ENCODE measurements at regions of chr21 and their contacts with region 1.

Region 1: DNA sequence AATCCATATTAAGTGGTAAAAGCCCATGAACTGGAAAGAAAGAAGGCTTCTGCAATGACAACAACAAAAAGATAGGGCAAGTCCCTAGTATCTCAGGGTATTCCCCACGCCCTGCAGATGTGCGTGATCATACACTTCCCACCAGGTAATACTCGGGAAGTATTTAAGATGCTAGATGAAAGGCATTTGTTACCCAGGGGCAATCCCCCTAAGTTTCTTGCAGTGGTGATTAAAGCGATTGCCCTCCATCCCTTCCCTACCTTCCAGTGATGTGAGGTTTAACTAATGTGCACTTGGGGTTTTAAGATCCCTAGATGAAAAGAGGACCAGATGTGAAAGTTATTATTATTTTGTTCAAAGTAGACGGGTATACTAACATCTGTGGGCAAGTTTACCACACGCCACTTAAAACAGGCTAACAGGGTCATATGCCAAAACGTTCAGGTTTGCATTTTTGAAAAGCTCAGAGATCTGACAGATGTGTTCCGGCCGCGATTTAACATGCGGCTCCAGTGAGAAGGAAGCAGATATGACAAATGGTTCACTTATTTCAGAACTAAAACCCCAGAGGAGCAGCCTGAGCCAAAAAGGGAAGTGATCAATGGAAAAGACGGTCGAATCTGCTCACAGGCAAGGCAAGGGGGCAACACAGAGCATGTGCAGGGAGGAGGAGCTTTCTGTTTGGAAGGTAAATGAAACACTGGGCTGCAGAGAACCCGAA is 17.4 kb downstream of the TIAM1 start:
- DNase-seq: peak; percentile 80
- ATAC-seq: peak; percentile 93
- H3K4me3 Mint-ChIP-seq: peak overlapping the region; percentile 28
- H3K27ac Mint-ChIP-seq: peak overlapping the region; percentile 89
- H3K4me1 Mint-ChIP-seq: peaks cover 32% of the 10 kb centered on the region
- H3K27me3 Mint-ChIP-seq: no peaks in the 10 kb centered on the region

Region 2: DNA sequence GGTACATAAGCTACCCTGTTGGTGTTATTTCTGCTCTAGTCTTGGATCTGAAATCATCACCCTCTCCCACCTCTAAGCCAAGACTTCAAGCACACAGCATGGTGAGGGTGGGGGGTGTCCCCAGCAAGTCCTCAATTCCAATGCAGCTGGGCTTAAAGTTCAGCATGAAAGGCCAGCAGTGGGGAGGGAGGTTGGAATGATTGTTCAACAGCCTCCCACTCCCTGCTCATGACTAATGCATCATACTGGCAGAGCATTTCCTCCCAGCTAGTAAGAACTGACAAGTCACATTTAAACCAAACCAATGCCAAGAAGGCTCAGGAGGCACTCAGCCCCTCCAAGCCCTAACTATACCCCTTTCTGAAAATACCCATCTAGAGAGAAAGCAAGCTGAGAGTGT is 32.7 kb before region 1 on chr21:
- CTCF ChIA-PET with region 1: no interaction called
- POLR2A ChIA-PET with region 1: interaction called, 12 read pairs
- intact Hi-C with region 1: loop called (anchors 1 to 5 kb)
- DNase-seq: peak; percentile 85
- ATAC-seq: peak; percentile 94
- H3K4me3 Mint-ChIP-seq: no peak overlapping the region
- H3K27ac Mint-ChIP-seq: peak overlapping the region; percentile 79
- H3K4me1 Mint-ChIP-seq: peaks cover 47% of the 10 kb centered on the region
- H3K27me3 Mint-ChIP-seq: no peaks in the 10 kb centered on the region

Region 3: DNA sequence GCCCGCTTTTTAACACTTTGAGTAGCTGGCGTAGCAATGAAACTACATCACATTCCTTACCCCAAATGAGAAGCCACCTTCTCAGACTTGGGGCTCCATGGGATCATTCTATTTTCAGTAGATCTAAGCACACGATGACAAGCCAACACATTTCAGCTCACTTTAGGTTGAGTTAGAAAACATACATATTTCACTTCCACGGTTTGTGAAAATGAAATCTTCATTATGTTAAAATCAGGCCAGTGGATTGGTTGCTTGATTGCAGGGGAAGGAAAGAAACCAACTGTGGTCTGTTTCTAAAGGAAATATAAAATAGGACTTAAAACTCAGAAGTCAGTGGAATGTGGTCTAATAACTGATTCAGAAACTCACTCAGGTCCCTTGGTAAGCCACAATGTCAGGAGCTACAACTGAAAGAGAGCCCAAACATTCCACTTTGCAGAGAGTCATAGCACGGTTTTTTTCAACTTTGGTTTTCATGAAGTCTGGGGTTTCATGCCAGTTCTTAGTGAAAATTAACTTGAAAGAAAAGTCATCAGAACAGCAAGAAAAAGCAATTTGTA is 99.6 kb after region 1 on chr21:
- CTCF ChIA-PET with region 1: no interaction called
- POLR2A ChIA-PET with region 1: no interaction called
- intact Hi-C with region 1: loop called (anchors 1 kb)
- DNase-seq: peak; percentile 22
- ATAC-seq: peak; percentile 89
- H3K4me3 Mint-ChIP-seq: peak overlapping the region; percentile 18
- H3K27ac Mint-ChIP-seq: peak overlapping the region; percentile 53
- H3K4me1 Mint-ChIP-seq: peaks cover 20% of the 10 kb centered on the region
- H3K27me3 Mint-ChIP-seq: no peaks in the 10 kb centered on the region